Caco-2 (cell line): ENCODE measurements at regions of chr1 and their contacts with region 1.

Region 1: DNA sequence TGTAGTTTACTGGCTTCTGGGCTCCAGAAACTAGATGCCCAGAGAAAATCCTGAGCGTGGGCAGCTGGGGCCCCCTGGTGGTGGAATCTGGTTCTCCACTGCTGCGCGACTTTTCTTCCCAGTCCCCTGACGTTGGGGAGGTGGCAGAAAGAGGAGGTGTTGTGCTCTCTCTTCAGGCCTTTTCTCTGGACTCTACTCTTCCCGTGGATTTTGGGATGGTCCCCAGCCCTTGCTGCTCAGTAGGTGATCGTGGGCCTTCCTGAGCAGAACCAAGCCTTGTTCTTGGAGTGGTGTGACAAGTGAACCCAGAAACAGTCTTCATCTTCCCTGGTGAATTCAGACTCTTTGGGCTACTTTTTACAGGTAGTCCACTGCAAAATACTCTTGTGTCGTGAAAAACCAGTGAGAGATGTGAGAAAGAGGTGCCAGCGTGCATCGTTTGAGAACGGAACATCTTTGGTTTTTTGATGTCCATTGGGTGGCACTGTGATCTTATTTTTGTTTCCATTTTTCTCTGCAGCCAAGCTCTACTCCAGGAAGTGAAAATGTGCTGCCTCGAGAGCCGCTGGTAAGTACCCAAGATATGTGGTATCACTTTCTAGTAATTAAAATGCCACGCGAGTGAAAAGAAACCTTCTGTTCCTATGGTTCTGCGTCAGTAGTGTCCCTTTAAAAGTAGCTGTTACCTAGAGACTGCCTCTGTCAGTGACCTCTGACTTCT is 20.2 kb downstream of the PEX14 start:
- DNase-seq: peak; percentile 64 to 84
- H3K4me3 ChIP-seq: no peak overlapping the region
- H3K4me3 Mint-ChIP-seq: peak overlapping the region; percentile 17
- H3K27ac Mint-ChIP-seq: peak overlapping the region; percentile 45
- H3K4me1 ChIP-seq: peaks cover 10% of the 10 kb centered on the region
- H3K4me1 Mint-ChIP-seq: peaks cover under 1% of the 10 kb centered on the region
- H3K27me3 ChIP-seq: no peaks in the 10 kb centered on the region
- H3K27me3 Mint-ChIP-seq: no peaks in the 10 kb centered on the region
- CTCF ChIP-seq: peak; percentile 88

Region 2: DNA sequence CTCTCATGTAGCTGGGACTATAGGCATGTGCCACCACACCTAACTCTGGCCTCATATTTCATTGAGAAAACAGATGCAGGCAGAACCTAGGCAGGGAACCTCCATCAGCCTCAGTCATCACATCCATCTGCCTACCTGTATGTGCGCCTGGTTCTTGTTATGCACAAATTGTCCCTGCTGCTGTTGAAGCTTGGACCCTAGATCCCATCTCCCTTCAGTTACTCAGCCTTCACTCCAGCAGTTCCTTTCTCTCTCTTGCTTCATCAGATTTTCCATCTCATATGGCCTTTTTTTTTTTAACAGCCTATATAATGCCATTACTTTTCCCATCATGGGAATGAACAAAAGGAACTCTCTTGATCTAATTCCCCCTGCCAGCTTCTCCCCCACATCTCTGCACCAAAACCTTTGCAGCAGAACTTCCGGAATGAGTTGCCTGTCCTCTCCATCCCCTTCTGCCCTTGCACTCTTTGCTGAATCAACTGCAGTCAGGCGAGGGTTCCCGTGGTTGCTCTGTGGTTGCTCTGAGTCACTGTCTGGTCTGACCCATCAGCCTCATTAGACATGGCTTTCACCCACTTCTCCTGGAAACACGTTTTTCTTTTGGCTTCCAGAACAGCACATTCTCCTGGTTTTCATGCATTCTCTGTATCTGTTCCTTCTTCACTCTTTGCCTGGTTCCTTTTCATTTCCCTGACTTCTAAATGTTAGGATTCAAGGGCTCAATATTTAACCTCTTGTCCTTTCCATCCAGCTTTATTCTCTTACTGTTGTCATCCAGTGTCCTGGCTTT is 420.7 kb before region 1 on chr1:
- CTCF ChIA-PET with region 1: no interaction called
- POLR2A ChIA-PET with region 1: no interaction called
- intact Hi-C with region 1: no loop called
- DNase-seq: no peak
- H3K4me3 ChIP-seq: no peak overlapping the region
- H3K4me3 Mint-ChIP-seq: no peak overlapping the region
- H3K27ac Mint-ChIP-seq: no peak overlapping the region
- H3K4me1 ChIP-seq: no peaks in the 10 kb centered on the region
- H3K4me1 Mint-ChIP-seq: no peaks in the 10 kb centered on the region
- H3K27me3 ChIP-seq: no peaks in the 10 kb centered on the region
- H3K27me3 Mint-ChIP-seq: no peaks in the 10 kb centered on the region
- CTCF ChIP-seq: no peak

Region 3: GRCh38 chr1:10378081-10378841 is 116.7 kb before region 1 on chr1:
- CTCF ChIA-PET with region 1: no interaction called
- POLR2A ChIA-PET with region 1: no interaction called
- intact Hi-C with region 1: loop called (anchors 1 kb)
- DNase-seq: peak in 1 of 2 experiments; percentile 30
- H3K4me3 ChIP-seq: no peak overlapping the region
- H3K4me3 Mint-ChIP-seq: no peak overlapping the region
- H3K27ac Mint-ChIP-seq: no peak overlapping the region
- H3K4me1 ChIP-seq: no peaks in the 10 kb centered on the region
- H3K4me1 Mint-ChIP-seq: no peaks in the 10 kb centered on the region
- H3K27me3 ChIP-seq: no peaks in the 10 kb centered on the region
- H3K27me3 Mint-ChIP-seq: no peaks in the 10 kb centered on the region
- CTCF ChIP-seq: no peak

Region 4: DNA sequence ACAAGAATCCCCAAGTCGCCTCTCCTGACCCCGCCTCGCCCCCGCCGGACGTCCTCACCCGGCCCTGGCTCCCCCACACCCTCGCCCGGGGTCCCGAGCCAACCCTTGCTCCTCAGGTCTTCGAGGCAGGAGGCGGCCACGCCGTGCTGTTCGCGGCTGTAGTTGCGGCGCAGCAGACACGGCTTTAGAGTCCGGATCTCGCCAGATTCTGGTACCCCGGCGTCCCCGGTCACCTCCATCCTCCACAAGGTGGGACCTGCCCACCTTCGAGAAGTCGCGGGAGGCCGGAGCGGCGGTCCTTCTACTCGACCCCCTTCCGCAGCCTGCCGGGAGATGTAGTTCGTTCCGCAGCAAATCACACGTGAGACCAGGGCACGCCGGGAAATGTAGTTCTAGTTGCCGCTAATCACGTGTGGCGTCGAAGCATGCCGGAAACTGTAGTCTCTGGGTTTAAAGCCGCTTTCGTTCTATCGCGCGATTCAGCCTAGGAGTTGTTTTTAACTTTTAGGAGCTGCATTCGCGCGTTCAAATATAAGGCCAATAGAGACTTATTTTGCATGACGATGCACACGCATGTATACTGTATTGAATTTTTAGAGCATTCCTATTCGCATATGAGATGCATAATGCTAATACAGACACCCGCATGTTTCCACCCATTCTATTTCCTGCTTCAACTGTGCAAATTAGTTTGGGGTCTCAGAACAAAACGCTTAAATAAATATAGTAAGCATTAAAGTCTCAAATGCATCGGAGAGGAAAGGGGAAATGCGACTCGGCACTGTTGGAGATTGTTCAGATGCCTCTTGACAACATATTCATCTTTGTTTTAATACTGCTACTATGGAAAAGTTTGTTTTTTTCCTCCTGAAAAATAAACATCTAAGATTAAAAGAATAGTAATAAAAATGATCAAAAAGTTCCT is 22.4 kb before region 1 on chr1 and contains the start of gene DFFA:
- CTCF ChIA-PET with region 1: interaction called, 4 read pairs
- POLR2A ChIA-PET with region 1: no interaction called
- intact Hi-C with region 1: loop called (anchors 2 kb)
- DNase-seq: peak; percentile 93 to 96
- H3K4me3 ChIP-seq: peak within 1 kb of the TSS; percentile 58
- H3K4me3 Mint-ChIP-seq: peak within 1 kb of the TSS; percentile 94
- H3K27ac Mint-ChIP-seq: peak within 1 kb of the TSS; percentile 95
- H3K4me1 ChIP-seq: 0 out of 2 replicates have a peak, but pooled peaks cover 4% of the 10 kb centered on the region
- H3K4me1 Mint-ChIP-seq: peaks cover 14% of the 10 kb centered on the region
- H3K27me3 ChIP-seq: no peaks in the 10 kb centered on the region
- H3K27me3 Mint-ChIP-seq: no peaks in the 10 kb centered on the region
- CTCF ChIP-seq: no peak
- total RNA-seq, gene DFFA: 80.2 and 80.4 TPM in 2 replicates

Region 5: GRCh38 chr1:10555614-10556429 is 60.9 kb after region 1 on chr1:
- CTCF ChIA-PET with region 1: no interaction called
- POLR2A ChIA-PET with region 1: no interaction called
- intact Hi-C with region 1: no loop called
- DNase-seq: peak; percentile 67 to 74
- H3K4me3 ChIP-seq: no peak overlapping the region
- H3K4me3 Mint-ChIP-seq: no peak overlapping the region
- H3K27ac Mint-ChIP-seq: peak overlapping the region; percentile 84
- H3K4me1 ChIP-seq: peaks cover 15% of the 10 kb centered on the region; the same call in 1 of the 2 replicates
- H3K4me1 Mint-ChIP-seq: peaks cover 11% of the 10 kb centered on the region
- H3K27me3 ChIP-seq: no peaks in the 10 kb centered on the region
- H3K27me3 Mint-ChIP-seq: no peaks in the 10 kb centered on the region
- CTCF ChIP-seq: no peak